ENCODE measurements at regions of chr10 and their contacts with region 1.

Region 1: GRCh38 chr10:80444646-80445319 is 9.3 kb upstream of the TSPAN14 start:
- DNase-seq: peak; percentile 62
- H3K4me3 Mint-ChIP-seq: no peak overlapping the region
- H3K27ac Mint-ChIP-seq: peak overlapping the region; percentile 51
- H3K4me1 Mint-ChIP-seq: peaks cover 26% of the 10 kb centered on the region
- H3K27me3 Mint-ChIP-seq: peaks cover 22% of the 10 kb centered on the region

Region 2: GRCh38 chr10:80110986-80111385 is 333.8 kb before region 1 on chr10:
- intact Hi-C with region 1: no loop called
- DNase-seq: no peak
- H3K4me3 Mint-ChIP-seq: no peak overlapping the region
- H3K27ac Mint-ChIP-seq: no peak overlapping the region
- H3K4me1 Mint-ChIP-seq: no peaks in the 10 kb centered on the region
- H3K27me3 Mint-ChIP-seq: peaks cover 2% of the 10 kb centered on the region

Region 3: DNA sequence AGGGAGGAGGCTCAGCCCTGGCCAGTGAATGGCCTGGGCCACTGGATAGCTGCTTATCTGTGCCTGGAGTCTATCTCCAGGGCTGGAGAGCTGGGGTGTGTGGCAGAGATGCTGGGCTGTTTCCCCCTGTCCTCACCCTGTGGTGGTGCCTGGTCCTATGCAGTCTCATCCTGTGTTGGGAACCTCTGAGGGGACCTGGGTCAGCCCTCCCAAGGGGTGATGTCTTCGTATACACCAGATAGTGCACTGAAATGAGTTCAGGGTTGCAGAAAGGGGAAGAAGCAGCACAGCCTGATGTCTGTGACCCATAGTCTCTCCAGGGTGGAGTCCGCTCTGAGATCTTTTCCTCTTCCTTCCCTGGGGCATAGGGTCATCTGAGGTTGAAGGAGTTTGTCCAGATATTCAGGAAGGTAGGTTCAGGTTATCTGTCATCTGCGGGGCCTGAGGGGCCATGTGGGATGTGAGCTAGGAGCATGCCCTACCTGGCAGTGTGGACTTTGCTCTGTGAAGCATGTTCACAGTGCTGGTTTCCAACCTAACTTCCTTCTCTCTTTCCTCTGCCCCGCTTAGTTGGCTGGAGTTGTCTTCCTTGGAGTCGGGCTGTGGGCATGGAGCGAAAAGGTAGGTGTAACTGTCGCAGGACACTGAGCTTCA is 59.5 kb after region 1 on chr10:
- intact Hi-C with region 1: loop called (anchors 1 kb)
- DNase-seq: no peak
- H3K4me3 Mint-ChIP-seq: no peak overlapping the region
- H3K27ac Mint-ChIP-seq: peak overlapping the region; percentile 1
- H3K4me1 Mint-ChIP-seq: peaks cover 56% of the 10 kb centered on the region
- H3K27me3 Mint-ChIP-seq: no peaks in the 10 kb centered on the region

Region 4: GRCh38 chr10:80599424-80599847 is 154.7 kb after region 1 on chr10:
- intact Hi-C with region 1: loop called (anchors 10 kb)
- DNase-seq: peak; percentile 28
- H3K4me3 Mint-ChIP-seq: no peak overlapping the region
- H3K27ac Mint-ChIP-seq: no peak overlapping the region
- H3K4me1 Mint-ChIP-seq: no peaks in the 10 kb centered on the region
- H3K27me3 Mint-ChIP-seq: peaks cover 2% of the 10 kb centered on the region

Measured in activated T-helper 2 cell treated with anti-CD3 and anti-CD28 coated beads, Interferon-gamma antibody, Interleukin-2, Interleukin-4, amounts not matched to agents 10 μg/mL and 5 μg/mL and 100 μg/mL, durations not matched to agents 14 hours and 24 hours and 36 hours (primary cell).